ENCODE measurements at regions of chr22 and their contacts with region 1.

Region 1: DNA sequence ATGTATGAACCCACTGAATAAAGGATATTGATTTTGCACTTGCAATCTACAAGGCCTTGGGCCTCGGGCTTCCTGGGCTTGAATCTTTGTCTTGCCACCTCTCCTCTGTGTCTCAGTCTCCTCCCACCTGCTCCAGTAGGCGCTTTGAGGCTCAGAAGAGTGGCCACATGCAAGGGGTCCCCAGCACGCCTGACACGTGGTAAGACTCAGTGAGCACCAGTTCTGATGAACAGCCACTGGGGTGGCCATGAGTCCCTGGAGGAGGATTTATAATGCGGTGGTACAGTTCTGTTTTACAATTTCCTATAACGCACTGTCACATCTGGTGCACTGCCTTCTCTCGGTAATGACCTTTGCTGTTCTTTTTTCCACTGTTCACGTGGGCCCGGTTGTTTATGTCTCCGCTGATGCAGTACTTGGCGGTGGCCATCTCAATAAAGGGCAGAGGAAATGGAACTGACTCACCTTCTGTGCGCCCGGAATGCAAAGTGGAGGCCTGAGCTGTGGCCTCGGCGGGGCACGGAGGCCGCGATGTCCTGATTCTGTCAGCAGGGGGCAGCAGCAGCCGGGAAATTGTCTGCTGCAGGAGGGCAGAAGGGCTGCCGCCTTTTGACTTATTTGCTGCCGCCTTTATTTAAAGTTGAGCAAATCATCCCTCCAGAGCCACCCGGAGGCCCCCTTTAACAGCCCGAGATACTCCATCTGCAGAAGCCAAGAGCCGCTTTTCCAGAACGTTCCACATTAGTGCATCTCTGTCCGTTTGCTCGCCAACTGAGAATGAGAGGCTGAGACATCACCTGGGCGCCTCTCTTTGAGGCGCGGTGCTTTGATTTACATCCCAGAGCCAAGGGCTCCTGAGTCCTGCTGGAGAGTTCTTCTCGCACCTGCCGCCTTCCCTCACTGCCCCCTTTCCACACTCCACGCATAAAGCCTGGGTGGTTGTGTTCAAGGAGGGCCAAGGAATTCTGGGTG is 6.0 kb upstream of the IFT27 start:
- DNase-seq: peak; percentile 31 to 53
- ATAC-seq: peak; percentile 71 to 87
- H3K4me3 ChIP-seq: no peak overlapping the region
- H3K27ac ChIP-seq: no peak overlapping the region
- H3K4me1 ChIP-seq: peaks cover 0 to 9% of the 10 kb centered on the region in 2 donors
- H3K27me3 ChIP-seq: peaks cover 0 to 27% (median 6%) of the 10 kb centered on the region in 3 donors
- CTCF ChIP-seq: peak; percentile 74 to 92 (median 88)
- POLR2A ChIP-seq: no peak

Region 2: GRCh38 chr22:36659762-36660509 is 122.0 kb before region 1 on chr22:
- in situ Hi-C with region 1: no loop called
- intact Hi-C with region 1: loop called (anchors 5 kb)
- DNase-seq: peak; percentile 72 to 94
- ATAC-seq: peak; percentile 89 to 92
- H3K4me3 ChIP-seq: peak overlapping the region in 1 of 4 donors; percentile 7
- H3K27ac ChIP-seq: peak overlapping the region; percentile 39 to 60 (median 49)
- H3K4me1 ChIP-seq: peaks cover 15 to 16% of the 10 kb centered on the region in 2 donors
- H3K27me3 ChIP-seq: peaks cover 0 to 5% (median under 1%) of the 10 kb centered on the region in 3 donors
- CTCF ChIP-seq: no peak
- POLR2A ChIP-seq: no peak

Region 3: DNA sequence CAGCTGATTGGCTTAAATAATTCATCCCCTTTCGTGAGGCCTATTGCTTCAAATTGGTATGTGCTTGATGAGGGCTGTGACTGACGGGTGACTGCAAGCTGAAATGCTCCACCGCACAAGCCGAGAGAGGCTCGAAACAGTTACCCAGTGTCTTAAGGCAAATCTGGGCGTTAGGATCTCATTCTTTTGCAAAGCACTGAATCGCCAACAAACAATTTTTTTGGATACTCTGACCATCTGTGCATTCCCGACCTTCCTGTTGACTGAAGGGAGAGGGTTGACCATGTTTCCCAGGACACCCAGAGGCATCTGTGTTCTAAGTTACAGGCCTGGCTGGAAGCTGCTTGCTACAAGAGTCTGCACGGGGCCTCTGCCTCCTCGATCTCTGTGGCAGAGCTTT is 110.5 kb before region 1 on chr22:
- in situ Hi-C with region 1: no loop called
- intact Hi-C with region 1: no loop called
- DNase-seq: no peak
- ATAC-seq: no peak
- H3K4me3 ChIP-seq: no peak overlapping the region
- H3K27ac ChIP-seq: no peak overlapping the region
- H3K4me1 ChIP-seq: no peaks in the 10 kb centered on the region
- H3K27me3 ChIP-seq: peaks cover 0 to 15% (median 6%) of the 10 kb centered on the region in 3 donors
- CTCF ChIP-seq: no peak
- POLR2A ChIP-seq: no peak

Region 4: GRCh38 chr22:36856121-36856791 is 74.3 kb after region 1 on chr22:
- in situ Hi-C with region 1: loop called in 1 of 4 experiments (anchors 10 kb)
- intact Hi-C with region 1: loop called (anchors 1 kb)
- DNase-seq: peak; percentile 79 to 81
- ATAC-seq: peak; percentile 89 to 96
- H3K4me3 ChIP-seq: peak overlapping the region in 1 of 4 donors; percentile 26
- H3K27ac ChIP-seq: no peak overlapping the region
- H3K4me1 ChIP-seq: peaks cover 8 to 24% of the 10 kb centered on the region in 2 donors
- H3K27me3 ChIP-seq: peaks cover 0 to under 1% (median 0%) of the 10 kb centered on the region in 3 donors
- CTCF ChIP-seq: peak; percentile 97 to 100 (median 99)
- POLR2A ChIP-seq: no peak

Region 5: GRCh38 chr22:37043828-37044538 is 262.0 kb after region 1 on chr22:
- in situ Hi-C with region 1: no loop called
- intact Hi-C with region 1: loop called (anchors 1 kb)
- DNase-seq: peak in 1 of 2 donors; percentile 51
- ATAC-seq: peak in 1 of 2 donors; percentile 70
- H3K4me3 ChIP-seq: no peak overlapping the region
- H3K27ac ChIP-seq: no peak overlapping the region
- H3K4me1 ChIP-seq: no peaks in the 10 kb centered on the region
- H3K27me3 ChIP-seq: peaks cover 0 to 11% (median 0%) of the 10 kb centered on the region in 3 donors
- CTCF ChIP-seq: peak in 4 of 5 experiments; percentile 43 to 62 (median 50)
- POLR2A ChIP-seq: no peak

Measured in gastrocnemius medialis (tissue), 4 donors.